Activated CD4-positive, alpha-beta memory T cell treated with anti-CD3 and anti-CD28 coated beads for 36 hours (primary cell): ENCODE measurements at regions of chr2 and their contacts with region 1.

Region 1: GRCh38 chr2:201182650-201183364 is at the start of gene CASP10:
- DNase-seq: no peak
- H3K4me3 Mint-ChIP-seq: peak within 1 kb of the TSS; percentile 85
- H3K27ac Mint-ChIP-seq: peak within 1 kb of the TSS; percentile 90
- H3K4me1 Mint-ChIP-seq: peaks cover 58% of the 10 kb centered on the region
- H3K27me3 Mint-ChIP-seq: no peaks in the 10 kb centered on the region
- total RNA-seq, gene CASP10: 15.9 to 16.7 TPM

Region 2: GRCh38 chr2:199940373-199940772 is 1242.4 kb before region 1 on chr2:
- CTCF ChIA-PET with region 1: no interaction called
- POLR2A ChIA-PET with region 1: no interaction called
- intact Hi-C with region 1: no loop called
- DNase-seq: no peak
- H3K4me3 Mint-ChIP-seq: no peak overlapping the region
- H3K27ac Mint-ChIP-seq: no peak overlapping the region
- H3K4me1 Mint-ChIP-seq: peaks cover 7% of the 10 kb centered on the region
- H3K27me3 Mint-ChIP-seq: no peaks in the 10 kb centered on the region

Region 3: DNA sequence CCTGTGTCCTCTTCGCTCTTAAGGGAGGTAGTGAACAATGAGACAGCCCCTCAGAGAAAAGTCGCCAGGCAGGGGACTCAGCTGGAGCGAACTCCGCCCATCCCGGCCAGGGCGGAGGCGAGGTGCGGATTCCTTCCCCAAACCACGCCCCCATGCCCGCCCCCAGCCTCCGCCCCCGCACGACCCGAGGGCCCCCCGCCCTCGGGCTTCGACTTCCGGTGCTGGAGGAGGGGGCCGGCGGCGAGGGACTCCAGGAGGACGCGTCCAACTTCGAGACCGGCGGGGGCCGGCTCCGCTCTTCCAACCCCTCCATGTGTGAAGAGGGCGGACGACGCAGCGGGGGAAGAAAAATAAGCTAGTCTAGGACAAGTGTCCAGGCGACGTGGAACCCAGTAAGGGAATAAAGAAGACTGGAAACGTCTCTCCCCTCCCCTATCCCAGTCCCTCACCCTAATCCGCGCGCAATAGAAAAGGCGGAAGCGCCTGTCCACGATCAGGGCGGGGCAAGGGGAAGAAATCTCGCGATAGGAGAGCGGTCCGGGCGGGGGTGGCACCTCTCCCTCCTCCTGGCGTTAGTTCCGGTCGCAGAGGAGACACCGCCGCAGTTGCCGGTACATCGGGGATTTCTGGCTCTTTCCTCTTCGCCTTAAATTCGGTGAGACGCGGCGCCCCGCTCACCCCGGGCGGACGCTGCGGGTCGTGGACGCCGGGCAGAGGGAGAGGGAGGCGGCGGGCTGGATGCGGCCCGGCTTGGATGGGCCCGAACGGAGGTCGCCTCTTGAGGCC is 371.3 kb before region 1 on chr2 and contains the start of gene BZW1:
- CTCF ChIA-PET with region 1: interaction called, 3 read pairs
- POLR2A ChIA-PET with region 1: no interaction called
- intact Hi-C with region 1: loop called (anchors 2 kb)
- DNase-seq: peak; percentile 98
- H3K4me3 Mint-ChIP-seq: peak within 1 kb of the TSS; percentile 100
- H3K27ac Mint-ChIP-seq: peak within 1 kb of the TSS; percentile 100
- H3K4me1 Mint-ChIP-seq: peaks cover 44% of the 10 kb centered on the region
- H3K27me3 Mint-ChIP-seq: peaks cover 1% of the 10 kb centered on the region
- total RNA-seq, gene BZW1: 416 to 423 TPM

Region 4: DNA sequence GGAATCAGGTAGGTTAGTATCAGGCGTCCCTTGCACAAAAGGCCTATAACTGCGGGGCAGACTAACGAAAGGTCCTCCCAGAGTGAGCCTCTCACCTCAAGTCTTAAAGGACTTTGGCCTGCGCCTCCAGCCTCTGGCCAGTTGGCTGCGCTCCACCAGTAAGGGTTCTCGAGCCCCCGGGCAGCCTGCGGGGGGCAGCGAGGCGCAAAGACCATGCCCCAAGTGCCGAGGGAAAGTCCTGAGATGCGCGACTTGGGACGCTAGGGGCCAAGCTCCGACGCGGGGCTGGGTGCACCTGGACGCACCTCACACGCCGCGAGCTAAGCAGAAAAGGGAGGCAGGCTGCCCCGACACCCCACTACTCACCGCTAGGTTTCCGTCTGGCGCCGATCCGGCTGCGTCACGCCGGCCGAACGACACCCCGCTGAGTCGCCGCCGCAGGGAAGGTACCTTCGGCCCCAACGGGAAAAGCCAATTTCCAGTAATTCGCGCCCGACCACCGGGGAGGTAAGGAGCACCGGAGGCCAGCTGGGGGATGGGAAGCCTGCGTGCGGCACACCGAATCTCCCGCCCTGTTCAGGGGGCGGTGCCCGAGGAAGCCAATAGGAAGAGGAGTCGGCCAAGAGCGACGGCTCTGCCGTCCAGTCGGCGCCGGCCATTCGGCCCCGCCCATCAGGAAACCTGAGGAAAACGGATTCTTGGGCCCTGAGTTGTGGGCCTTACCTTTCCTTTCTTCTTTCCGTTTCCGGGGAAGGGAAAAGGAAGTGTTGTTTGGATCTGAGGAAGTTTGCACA is 219.5 kb before region 1 on chr2 and contains the start of gene ORC2:
- CTCF ChIA-PET with region 1: interaction called, 15 read pairs
- POLR2A ChIA-PET with region 1: no interaction called
- intact Hi-C with region 1: no loop called
- DNase-seq: peak; percentile 95
- H3K4me3 Mint-ChIP-seq: peak within 1 kb of the TSS; percentile 89
- H3K27ac Mint-ChIP-seq: peak within 1 kb of the TSS; percentile 93
- H3K4me1 Mint-ChIP-seq: peaks cover 60% of the 10 kb centered on the region
- H3K27me3 Mint-ChIP-seq: no peaks in the 10 kb centered on the region
- total RNA-seq, gene ORC2: 53.0 to 65.1 TPM

Region 5: GRCh38 chr2:201130524-201131186 is 52.2 kb before region 1 on chr2:
- CTCF ChIA-PET with region 1: interaction called, 3 read pairs
- POLR2A ChIA-PET with region 1: interaction called, 7 read pairs
- intact Hi-C with region 1: loop called (anchors 2 kb)
- DNase-seq: peak; percentile 55
- H3K4me3 Mint-ChIP-seq: peak overlapping the region; percentile 92
- H3K27ac Mint-ChIP-seq: peak overlapping the region; percentile 94
- H3K4me1 Mint-ChIP-seq: peaks cover 54% of the 10 kb centered on the region
- H3K27me3 Mint-ChIP-seq: no peaks in the 10 kb centered on the region

Region 6: DNA sequence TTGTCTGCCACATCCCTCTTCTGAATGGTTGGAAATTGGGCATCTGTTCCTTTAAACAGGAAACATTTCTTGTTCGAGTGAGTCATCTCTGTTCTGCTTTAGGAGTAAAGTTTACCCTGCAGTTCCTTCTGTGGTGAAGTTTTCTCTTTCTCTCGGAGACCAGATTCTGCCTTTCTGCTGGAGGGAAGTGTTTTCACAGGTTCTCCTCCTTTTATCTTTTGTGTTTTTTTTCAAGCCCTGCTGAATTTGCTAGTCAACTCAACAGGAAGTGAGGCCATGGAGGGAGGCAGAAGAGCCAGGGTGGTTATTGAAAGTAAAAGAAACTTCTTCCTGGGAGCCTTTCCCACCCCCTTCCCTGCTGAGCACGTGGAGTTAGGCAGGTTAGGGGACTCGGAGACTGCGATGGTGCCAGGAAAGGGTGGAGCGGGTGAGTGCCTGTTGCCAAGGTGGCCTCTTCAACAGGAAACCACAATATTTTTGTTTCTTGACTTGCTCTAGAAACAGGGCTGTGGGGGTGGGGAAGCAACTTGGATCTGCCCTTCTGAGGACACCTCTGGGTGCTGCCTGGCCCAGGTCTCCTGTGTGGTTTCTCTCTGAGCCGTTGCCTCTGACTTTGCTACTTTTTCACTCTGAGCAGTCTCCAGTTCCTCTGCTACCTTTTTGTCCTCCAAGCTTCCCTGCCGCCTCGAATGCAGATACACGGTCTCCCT is 75.3 kb after region 1 on chr2:
- CTCF ChIA-PET with region 1: interaction called, 4 read pairs
- POLR2A ChIA-PET with region 1: interaction called, 3 read pairs
- intact Hi-C with region 1: loop called (anchors 2 kb)
- DNase-seq: peak; percentile 96
- H3K4me3 Mint-ChIP-seq: peak overlapping the region; percentile 85
- H3K27ac Mint-ChIP-seq: peak overlapping the region; percentile 98
- H3K4me1 Mint-ChIP-seq: peaks cover 66% of the 10 kb centered on the region
- H3K27me3 Mint-ChIP-seq: no peaks in the 10 kb centered on the region

Region 7: GRCh38 chr2:201642579-201643215 is 459.9 kb after region 1 on chr2:
- CTCF ChIA-PET with region 1: no interaction called
- POLR2A ChIA-PET with region 1: no interaction called
- intact Hi-C with region 1: loop called (anchors 5 kb)
- DNase-seq: peak; percentile 89
- H3K4me3 Mint-ChIP-seq: peak overlapping the region; percentile 87
- H3K27ac Mint-ChIP-seq: peak overlapping the region; percentile 84
- H3K4me1 Mint-ChIP-seq: peaks cover 10% of the 10 kb centered on the region
- H3K27me3 Mint-ChIP-seq: no peaks in the 10 kb centered on the region